ENCODE measurements at regions of chr12 and their contacts with region 1.

Region 1: DNA sequence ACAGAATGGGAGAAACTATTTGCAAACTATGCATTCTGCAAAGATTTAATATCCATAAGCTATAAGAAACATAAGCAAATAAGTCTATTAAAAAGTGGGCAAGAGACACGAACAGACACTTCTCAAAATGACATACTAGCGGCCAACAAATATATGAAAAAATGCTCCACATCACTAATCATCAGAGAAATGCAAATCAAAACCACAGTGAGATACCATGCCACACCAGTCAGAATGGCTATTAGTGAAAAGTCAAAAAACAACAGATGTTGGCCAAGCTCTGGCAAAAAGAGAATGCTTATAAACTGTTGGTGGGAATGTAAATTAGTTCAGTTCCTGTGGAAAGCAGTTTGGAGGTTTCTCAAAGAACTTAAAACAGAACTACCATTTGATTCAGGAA is 121.3 kb downstream of the KCNMB4 start:
- DNase-seq: no peak
- ATAC-seq: peak; percentile 40
- H3K4me3 Mint-ChIP-seq: no peak overlapping the region
- H3K27ac Mint-ChIP-seq: peak overlapping the region; percentile 38
- H3K4me1 Mint-ChIP-seq: peaks cover 38% of the 10 kb centered on the region
- H3K27me3 Mint-ChIP-seq: no peaks in the 10 kb centered on the region
- CTCF ChIP-seq: no peak

Region 2: GRCh38 chr12:70467908-70468733 is 19.3 kb before region 1 on chr12:
- CTCF ChIA-PET with region 1: no interaction called
- POLR2A ChIA-PET with region 1: interaction called, 3 read pairs
- intact Hi-C with region 1: loop called (anchors 2 kb)
- DNase-seq: no peak
- ATAC-seq: no peak
- H3K4me3 Mint-ChIP-seq: peak overlapping the region; percentile 73
- H3K27ac Mint-ChIP-seq: no peak overlapping the region
- H3K4me1 Mint-ChIP-seq: no peaks in the 10 kb centered on the region
- H3K27me3 Mint-ChIP-seq: no peaks in the 10 kb centered on the region
- CTCF ChIP-seq: no peak